Ascending aorta (tissue), 2 donors: ENCODE measurements at regions of chr9 and their contacts with region 1.

Region 1: DNA sequence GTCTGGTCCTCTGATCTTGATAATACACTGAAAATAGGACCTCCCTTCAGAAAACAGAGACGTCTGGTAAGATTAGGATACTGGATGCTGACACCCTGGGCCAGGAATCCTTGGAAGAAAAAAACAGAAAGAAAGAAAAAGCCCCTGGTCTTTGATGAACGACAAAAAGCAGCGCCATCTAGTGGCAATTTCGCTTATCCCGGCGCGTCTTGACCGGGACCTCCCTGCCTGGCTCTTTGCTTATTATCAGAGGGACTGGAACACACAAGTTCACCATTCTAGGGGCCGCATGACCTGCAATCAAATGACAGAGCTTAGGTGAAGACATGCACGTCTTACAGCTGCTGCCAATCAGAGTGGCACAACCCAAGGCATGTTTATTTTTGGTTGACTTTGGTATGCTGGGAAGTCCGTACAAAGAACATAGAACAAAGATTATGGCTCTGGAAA is 114.9 kb upstream of the NFIB start:
- DNase-seq: peak in 1 of 2 donors; percentile 83
- H3K4me3 ChIP-seq: peak overlapping the region in 1 of 2 donors; percentile 17
- H3K27ac ChIP-seq: no peak overlapping the region
- H3K4me1 ChIP-seq: peaks cover 3 to 8% of the 10 kb centered on the region in 2 donors
- H3K27me3 ChIP-seq: no peaks in the 10 kb centered on the region
- CTCF ChIP-seq: peak; percentile 24 to 86 (median 75)

Region 2: DNA sequence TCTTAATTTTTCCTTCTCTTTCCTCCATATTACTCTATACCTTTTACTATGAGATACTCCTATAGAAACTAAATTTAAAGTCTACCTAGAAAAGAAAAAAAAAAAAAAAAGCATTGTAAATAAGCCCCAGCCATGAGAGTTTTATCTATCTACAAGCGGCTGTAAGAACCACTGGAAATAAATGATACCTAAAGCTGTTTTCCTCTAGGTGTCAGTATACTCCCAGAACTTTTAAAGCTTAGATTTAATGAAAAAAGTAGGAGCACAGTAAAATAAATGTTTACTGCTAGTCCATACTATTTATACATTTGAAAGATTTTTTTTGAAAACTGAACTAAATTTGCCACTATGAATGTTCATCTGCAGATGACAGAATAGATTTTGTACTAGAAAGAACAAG is 1709.4 kb before region 1 on chr9:
- intact Hi-C with region 1: loop called (anchors 10 kb)
- DNase-seq: no peak
- H3K4me3 ChIP-seq: no peak overlapping the region
- H3K27ac ChIP-seq: no peak overlapping the region
- H3K4me1 ChIP-seq: no peaks in the 10 kb centered on the region
- H3K27me3 ChIP-seq: no peaks in the 10 kb centered on the region
- CTCF ChIP-seq: peak in 2 of 3 experiments; percentile 40 to 56

Region 3: GRCh38 chr9:13033959-13034693 is 1394.7 kb before region 1 on chr9:
- intact Hi-C with region 1: loop called (anchors 5 kb)
- DNase-seq: peak in 1 of 2 donors; percentile 77
- H3K4me3 ChIP-seq: peak overlapping the region in 1 of 2 donors; percentile 55
- H3K27ac ChIP-seq: no peak overlapping the region
- H3K4me1 ChIP-seq: no peaks in the 10 kb centered on the region
- H3K27me3 ChIP-seq: no peaks in the 10 kb centered on the region
- CTCF ChIP-seq: peak; percentile 67 to 77 (median 67)

Region 4: DNA sequence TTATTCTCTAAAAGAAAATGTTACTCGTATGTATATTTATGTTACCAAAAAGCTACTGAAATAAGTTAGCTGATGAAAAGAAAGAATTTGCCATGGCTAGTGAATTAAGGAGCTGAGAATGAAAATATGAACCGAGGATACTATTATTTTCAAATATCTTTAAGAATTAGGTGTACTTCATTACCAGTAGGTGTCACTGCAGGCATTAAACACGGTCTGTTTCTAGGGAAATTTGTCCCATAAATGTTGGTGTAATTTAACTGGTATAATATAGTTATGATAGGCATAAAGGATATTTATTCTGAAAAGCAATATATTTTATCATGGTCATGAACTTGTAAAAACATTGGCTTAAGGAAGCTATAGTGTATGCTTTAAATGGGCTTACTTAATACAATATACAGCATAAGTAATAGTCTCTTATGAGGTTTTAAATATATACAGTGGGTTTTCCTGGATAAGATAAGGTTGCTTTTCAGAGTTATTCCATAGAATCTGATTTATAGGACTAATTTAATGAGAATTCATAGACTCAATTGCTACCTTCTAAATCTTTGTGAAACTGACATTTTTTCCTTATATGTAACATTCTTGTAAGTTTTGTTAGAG is 1076.9 kb before region 1 on chr9:
- intact Hi-C with region 1: loop called (anchors 5 kb)
- DNase-seq: no peak
- H3K4me3 ChIP-seq: no peak overlapping the region
- H3K27ac ChIP-seq: no peak overlapping the region
- H3K4me1 ChIP-seq: no peaks in the 10 kb centered on the region
- H3K27me3 ChIP-seq: no peaks in the 10 kb centered on the region
- CTCF ChIP-seq: peak; percentile 36 to 62 (median 45)

Region 5: GRCh38 chr9:13427587-13427986 is 1001.2 kb before region 1 on chr9:
- intact Hi-C with region 1: loop called (anchors 5 kb)
- DNase-seq: no peak
- H3K4me3 ChIP-seq: no peak overlapping the region
- H3K27ac ChIP-seq: no peak overlapping the region
- H3K4me1 ChIP-seq: no peaks in the 10 kb centered on the region
- H3K27me3 ChIP-seq: no peaks in the 10 kb centered on the region
- CTCF ChIP-seq: peak; percentile 52 to 79 (median 68)

Region 6: DNA sequence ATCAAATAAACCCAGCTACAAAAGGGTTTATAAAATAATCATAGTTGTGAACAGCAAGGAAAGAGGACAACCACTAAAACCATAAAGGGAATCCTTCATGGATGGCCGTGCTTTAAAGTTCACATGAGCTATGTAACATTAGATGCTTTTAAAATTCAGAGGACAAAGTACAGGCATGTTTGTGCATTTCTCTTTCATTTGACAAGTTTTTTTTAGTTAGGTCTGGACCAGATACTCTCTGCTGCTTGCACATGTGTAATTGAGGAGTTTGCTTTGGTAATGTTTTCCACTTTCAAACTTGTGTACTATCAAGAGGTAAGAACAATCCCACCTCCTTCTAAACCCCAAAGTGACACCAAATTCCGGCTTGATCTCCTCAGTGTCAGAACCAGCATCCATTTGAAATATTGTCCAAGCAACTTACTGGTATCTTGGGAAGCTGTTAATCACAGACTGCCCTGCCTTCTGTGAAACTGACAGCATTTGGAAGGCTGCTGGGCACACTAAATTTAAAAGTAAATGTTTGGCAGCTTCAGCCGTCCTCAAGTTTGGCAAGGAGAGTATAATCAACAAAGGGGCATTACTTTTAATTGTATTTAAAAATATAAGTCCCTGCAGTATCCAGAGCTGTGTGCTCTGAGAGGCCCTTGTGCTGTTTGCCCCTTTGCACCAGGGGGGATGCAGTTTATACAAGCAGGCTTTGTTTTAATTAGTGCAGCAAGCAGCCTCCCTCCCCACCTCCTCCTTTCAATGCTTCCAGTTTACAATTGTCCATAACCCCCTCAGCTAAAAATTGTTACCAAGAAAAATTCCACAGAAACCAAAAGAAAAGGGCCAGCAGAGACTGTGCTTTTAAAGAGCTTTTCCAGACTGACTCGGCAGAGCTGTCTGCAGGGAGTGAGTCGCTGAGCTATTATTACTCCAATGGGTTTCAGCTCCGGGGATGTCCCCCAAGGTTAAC is 821.0 kb before region 1 on chr9:
- intact Hi-C with region 1: no loop called
- DNase-seq: no peak
- H3K4me3 ChIP-seq: peak overlapping the region in 1 of 2 donors; percentile 48
- H3K27ac ChIP-seq: peak overlapping the region; percentile 68 to 71
- H3K4me1 ChIP-seq: peaks cover 0 to 11% of the 10 kb centered on the region in 2 donors
- H3K27me3 ChIP-seq: no peaks in the 10 kb centered on the region
- CTCF ChIP-seq: no peak

Region 7: GRCh38 chr9:14379280-14379679 is 49.5 kb before region 1 on chr9:
- intact Hi-C with region 1: loop called (anchors 5 kb)
- DNase-seq: no peak
- H3K4me3 ChIP-seq: no peak overlapping the region
- H3K27ac ChIP-seq: no peak overlapping the region
- H3K4me1 ChIP-seq: no peaks in the 10 kb centered on the region
- H3K27me3 ChIP-seq: no peaks in the 10 kb centered on the region
- CTCF ChIP-seq: no peak